ENCODE measurements at regions of chr1 and their contacts with region 1.

Region 1: GRCh38 chr1:52127181-52128180 is 14.4 kb upstream of the ZFYVE9 start:
- DNase-seq: peak; percentile 85
- H3K4me3 ChIP-seq: no peak overlapping the region
- H3K27ac ChIP-seq: no peak overlapping the region
- H3K4me1 ChIP-seq: no peaks in the 10 kb centered on the region
- H3K27me3 ChIP-seq: no peaks in the 10 kb centered on the region
- CTCF ChIP-seq: peak; percentile 62 to 69
- POLR2A ChIP-seq: no peak

Region 2: DNA sequence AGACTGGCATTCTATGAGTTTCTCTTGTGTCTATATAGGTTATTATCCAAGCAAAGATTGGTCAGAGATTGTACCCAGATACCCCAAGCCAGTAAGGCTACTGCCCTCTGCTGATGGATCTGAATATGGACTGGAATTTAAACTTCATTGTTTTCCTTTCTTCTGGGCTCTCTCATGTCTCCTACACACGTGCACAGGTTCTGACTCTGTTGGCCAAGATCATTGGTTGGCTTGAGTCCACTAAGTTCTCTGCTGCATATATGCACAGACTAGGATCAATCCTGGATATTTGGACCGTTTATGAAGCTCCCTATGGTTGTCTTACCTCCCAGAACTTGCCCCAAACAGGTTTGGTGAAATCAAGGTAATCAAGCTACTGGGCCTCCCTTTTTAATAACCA is 168.9 kb after region 1 on chr1:
- CTCF ChIA-PET with region 1: interaction called, 97 read pairs
- POLR2A ChIA-PET with region 1: no interaction called
- dilution Hi-C with region 1: no loop called
- intact Hi-C with region 1: loop called (anchors 1 kb)
- DNase-seq: peak; percentile 78
- H3K4me3 ChIP-seq: no peak overlapping the region
- H3K27ac ChIP-seq: no peak overlapping the region
- H3K4me1 ChIP-seq: no peaks in the 10 kb centered on the region
- H3K27me3 ChIP-seq: no peaks in the 10 kb centered on the region
- CTCF ChIP-seq: peak; percentile 60 to 65
- POLR2A ChIP-seq: no peak

Region 3: GRCh38 chr1:52348704-52349300 is 221.3 kb after region 1 on chr1:
- CTCF ChIA-PET with region 1: interaction called, 25 read pairs
- POLR2A ChIA-PET with region 1: no interaction called
- dilution Hi-C with region 1: no loop called
- intact Hi-C with region 1: loop called (anchors 1 kb)
- DNase-seq: peak; percentile 24
- H3K4me3 ChIP-seq: no peak overlapping the region
- H3K27ac ChIP-seq: no peak overlapping the region
- H3K4me1 ChIP-seq: no peaks in the 10 kb centered on the region
- H3K27me3 ChIP-seq: no peaks in the 10 kb centered on the region
- CTCF ChIP-seq: peak; percentile 17 to 37
- POLR2A ChIP-seq: peak; percentile 60

Region 4: DNA sequence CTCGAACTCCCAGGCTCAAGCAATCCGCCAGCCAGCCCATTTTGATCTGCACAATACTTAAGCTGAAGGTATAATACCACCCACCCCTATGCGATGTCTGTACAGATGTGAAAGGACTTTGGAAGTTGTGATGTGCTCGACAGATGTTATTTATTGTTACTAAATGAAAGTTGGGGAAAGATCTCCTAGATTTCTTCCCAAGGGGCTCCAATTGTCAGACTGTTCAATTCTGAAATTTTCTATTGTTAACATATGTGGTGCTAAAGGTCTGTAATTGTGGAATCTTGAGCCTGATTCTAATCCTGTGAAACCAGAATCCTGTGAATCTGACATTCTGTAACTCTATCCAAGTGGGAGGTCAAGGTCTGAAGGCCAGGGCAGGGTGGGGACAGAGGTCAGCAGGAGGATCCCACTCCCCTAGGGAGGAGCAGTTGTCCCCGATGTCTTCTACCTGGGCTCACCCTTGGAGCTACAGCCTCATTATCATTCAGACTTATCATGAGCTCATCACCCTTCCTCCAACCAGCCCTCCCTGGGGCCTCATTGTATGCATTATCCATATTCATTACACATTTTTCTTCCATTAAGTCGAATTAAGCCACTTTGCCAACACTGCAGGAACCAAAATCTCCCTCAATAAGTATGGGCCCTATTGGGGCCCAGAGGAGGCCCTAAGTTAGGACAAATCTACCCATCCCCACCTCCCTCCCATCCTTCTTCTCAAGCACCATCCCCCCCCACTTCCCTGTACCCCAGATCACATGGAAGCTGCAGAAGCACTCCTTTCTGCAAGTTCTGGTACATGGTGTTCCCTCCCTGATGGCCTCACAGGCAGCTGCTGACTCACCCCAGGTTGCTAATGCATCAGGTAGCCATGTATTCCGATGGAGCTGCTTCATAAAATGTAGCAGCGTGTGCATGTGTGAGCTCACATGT is 537.8 kb after region 1 on chr1:
- CTCF ChIA-PET with region 1: no interaction called
- POLR2A ChIA-PET with region 1: no interaction called
- dilution Hi-C with region 1: no loop called
- intact Hi-C with region 1: loop called (anchors 5 kb)
- DNase-seq: no peak
- H3K4me3 ChIP-seq: no peak overlapping the region
- H3K27ac ChIP-seq: no peak overlapping the region
- H3K4me1 ChIP-seq: no peaks in the 10 kb centered on the region
- H3K27me3 ChIP-seq: peaks cover 0 to 2% of the 10 kb centered on the region in 2 experiments
- CTCF ChIP-seq: no peak
- POLR2A ChIP-seq: no peak